ENCODE measurements at regions of chr7 and their contacts with region 1.

Region 1: DNA sequence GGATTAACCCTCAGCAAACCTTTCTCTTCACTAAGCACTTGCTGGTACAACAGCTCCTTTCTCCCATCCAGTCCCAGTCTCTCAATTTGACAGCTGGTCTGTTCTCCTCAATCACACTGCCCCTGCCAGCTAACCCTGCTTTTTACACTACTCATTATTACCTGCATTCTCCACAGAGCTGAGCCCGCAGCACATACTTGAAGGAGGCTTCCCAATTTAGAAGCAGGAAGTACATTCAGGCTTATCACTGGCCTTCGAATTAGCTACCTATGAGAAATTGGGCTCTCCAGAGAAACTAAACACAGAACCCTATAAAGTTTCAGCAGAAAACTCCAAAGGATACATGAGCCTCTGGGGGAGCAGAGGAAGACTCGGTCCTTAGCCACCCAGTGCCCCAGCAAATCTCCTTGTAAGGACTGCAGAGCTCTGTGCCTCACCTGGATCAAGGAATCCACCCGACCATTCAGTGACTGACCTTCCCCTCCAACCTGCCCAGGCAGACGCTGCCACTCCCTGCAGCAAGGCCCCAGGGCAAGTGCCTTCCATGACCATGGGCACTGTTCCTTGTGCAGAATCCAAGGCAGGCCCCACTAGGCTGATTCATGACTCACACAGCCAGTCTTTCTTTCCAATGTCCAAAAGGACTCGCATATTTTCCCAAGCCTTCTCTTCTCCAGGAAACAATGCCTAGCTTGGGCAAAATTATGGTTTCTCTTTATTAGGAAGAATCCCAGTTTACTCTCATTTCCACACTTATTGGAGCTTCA is 68.0 kb downstream of the VOPP1 start:
- DNase-seq: no peak
- ATAC-seq: no peak
- H3K4me3 ChIP-seq: no peak overlapping the region
- H3K4me3 Mint-ChIP-seq: no peak overlapping the region
- H3K27ac ChIP-seq: no peak overlapping the region
- H3K27ac Mint-ChIP-seq: peak overlapping the region; percentile 84
- H3K4me1 ChIP-seq: no peaks in the 10 kb centered on the region
- H3K4me1 Mint-ChIP-seq: peaks cover 65% of the 10 kb centered on the region
- H3K27me3 ChIP-seq: no peaks in the 10 kb centered on the region
- H3K27me3 Mint-ChIP-seq: no peaks in the 10 kb centered on the region
- CTCF ChIP-seq: no peak

Region 2: GRCh38 chr7:55546829-55547228 is 42.6 kb after region 1 on chr7:
- CTCF ChIA-PET with region 1: no interaction called
- POLR2A ChIA-PET with region 1: no interaction called
- intact Hi-C with region 1: loop called in 1 of 2 experiments (anchors 5 kb)
- DNase-seq: peak in 3 of 9 experiments; percentile 25 to 36 (median 32)
- ATAC-seq: peak; percentile 56
- H3K4me3 ChIP-seq: no peak overlapping the region
- H3K4me3 Mint-ChIP-seq: no peak overlapping the region
- H3K27ac ChIP-seq: no peak overlapping the region
- H3K27ac Mint-ChIP-seq: no peak overlapping the region
- H3K4me1 ChIP-seq: peaks cover 17% of the 10 kb centered on the region
- H3K4me1 Mint-ChIP-seq: peaks cover 66% of the 10 kb centered on the region
- H3K27me3 ChIP-seq: no peaks in the 10 kb centered on the region
- H3K27me3 Mint-ChIP-seq: no peaks in the 10 kb centered on the region
- CTCF ChIP-seq: no peak